ENCODE measurements at regions of chr6 and their contacts with region 1.

Region 1: DNA sequence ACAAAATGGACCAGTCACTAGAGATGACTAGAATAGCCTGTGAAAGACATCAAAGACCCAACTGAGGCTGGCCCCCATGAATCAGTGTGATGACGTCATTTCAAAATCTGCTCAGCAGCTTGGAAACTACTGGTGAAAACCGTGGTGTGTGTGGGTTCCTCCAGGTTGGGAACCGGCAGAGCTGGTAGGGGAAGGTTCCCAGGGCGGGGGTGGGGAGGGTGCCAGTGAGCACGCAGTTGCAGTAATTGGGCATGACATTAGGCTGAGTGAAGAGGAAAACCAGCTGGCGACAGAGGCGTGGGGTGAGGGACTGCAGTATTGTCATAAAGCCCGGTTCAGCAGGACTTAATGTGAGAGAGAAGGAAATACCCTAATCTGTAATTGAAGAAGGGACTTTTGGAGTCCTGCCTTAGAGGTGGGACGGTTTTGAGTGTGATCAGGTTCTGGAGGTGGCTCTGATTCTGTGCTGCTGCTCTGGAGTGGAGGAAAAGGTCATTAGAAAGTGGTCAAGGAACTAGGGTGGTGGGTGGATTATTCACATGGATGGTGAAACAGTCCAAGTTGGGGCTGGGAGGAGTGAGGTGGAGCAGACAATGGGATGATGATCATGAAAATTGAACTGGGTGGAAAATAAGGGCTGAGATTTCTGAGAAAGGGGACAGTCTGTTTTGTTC is 52.0 kb upstream of the MTHFD1L start:
- DNase-seq: no peak
- H3K4me3 ChIP-seq: no peak overlapping the region
- H3K27ac ChIP-seq: no peak overlapping the region
- H3K4me1 ChIP-seq: peaks cover 0 to 11% of the 10 kb centered on the region in 2 donors
- H3K27me3 ChIP-seq: no peaks in the 10 kb centered on the region
- CTCF ChIP-seq: no peak
- POLR2A ChIP-seq: no peak

Region 2: GRCh38 chr6:150068720-150069648 is 744.5 kb before region 1 on chr6 and contains the start of gene ULBP3:
- intact Hi-C with region 1: loop called (anchors 10 kb)
- DNase-seq: peak; percentile 94 to 95
- H3K4me3 ChIP-seq: peak within 1 kb of the TSS; percentile 69 to 91 (median 71)
- H3K27ac ChIP-seq: peak within 1 kb of the TSS; percentile 53 to 70 (median 54)
- H3K4me1 ChIP-seq: peaks cover 9 to 20% of the 10 kb centered on the region in 2 donors
- H3K27me3 ChIP-seq: no peaks in the 10 kb centered on the region
- CTCF ChIP-seq: peak in 5 of 6 experiments; percentile 43 to 69 (median 62)
- POLR2A ChIP-seq: peak in 1 of 2 donors; percentile 92
- total RNA-seq, gene ULBP3: 2.4 to 31.7 (median 16.5) TPM

Region 3: DNA sequence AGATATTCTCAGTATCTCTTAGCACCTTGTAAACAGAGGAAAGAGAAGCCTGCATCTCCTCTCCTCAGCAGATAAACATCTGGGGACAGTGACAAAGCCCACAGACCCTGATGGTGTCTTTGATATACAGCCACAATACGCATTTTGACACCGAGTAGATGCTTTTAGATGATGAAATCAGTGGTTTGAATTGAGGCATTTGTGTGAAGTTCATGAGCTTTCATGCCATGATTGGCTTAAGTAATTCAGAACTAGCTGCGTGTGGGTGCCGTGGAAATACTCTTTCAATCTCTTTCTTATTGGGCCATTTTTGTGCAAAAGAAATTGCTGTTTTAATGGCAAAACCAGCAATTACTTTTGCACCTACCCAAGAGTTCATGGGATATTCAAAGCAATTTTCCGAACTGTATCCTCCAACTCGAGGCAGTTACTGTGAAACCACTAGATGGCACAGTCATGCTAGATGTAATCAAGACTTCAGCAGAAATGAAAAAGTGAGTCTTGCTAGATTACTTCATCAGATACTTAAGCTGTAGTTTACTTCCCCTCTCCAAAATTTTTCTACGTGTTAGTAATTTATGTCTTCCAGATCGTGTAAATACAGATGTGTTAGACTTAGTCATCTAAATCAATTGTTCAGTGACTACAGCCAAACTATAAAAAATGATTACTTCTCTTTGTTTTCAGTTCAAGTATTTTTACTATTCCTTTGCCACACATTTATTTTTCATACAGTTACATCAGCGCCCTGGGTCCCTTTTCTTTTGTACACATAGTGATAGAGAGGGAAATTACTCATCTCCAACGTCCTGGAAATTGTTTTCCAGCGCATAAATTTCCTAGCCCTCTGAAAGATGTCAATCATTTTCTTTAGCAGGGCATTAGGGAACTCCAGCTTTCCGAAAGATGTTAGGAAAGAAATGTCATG is 395.3 kb before region 1 on chr6:
- intact Hi-C with region 1: loop called (anchors 2 kb)
- DNase-seq: peak; percentile 24 to 29
- H3K4me3 ChIP-seq: peak overlapping the region in 1 of 3 donors; percentile 16
- H3K27ac ChIP-seq: peak overlapping the region; percentile 17 to 78 (median 53)
- H3K4me1 ChIP-seq: peaks cover 0 to 3% of the 10 kb centered on the region in 2 donors
- H3K27me3 ChIP-seq: no peaks in the 10 kb centered on the region
- CTCF ChIP-seq: peak; percentile 57 to 93 (median 76)
- POLR2A ChIP-seq: no peak

Region 4: GRCh38 chr6:150600301-150601017 is 213.0 kb before region 1 on chr6:
- intact Hi-C with region 1: loop called (anchors 10 kb)
- DNase-seq: peak; percentile 81 to 83
- H3K4me3 ChIP-seq: peak overlapping the region; percentile 35 to 72 (median 53)
- H3K27ac ChIP-seq: peak overlapping the region; percentile 53 to 77 (median 62)
- H3K4me1 ChIP-seq: peaks cover 0 to 3% of the 10 kb centered on the region in 2 donors
- H3K27me3 ChIP-seq: no peaks in the 10 kb centered on the region
- CTCF ChIP-seq: peak in 5 of 6 experiments; percentile 24 to 69 (median 60)
- POLR2A ChIP-seq: peak in 1 of 2 donors; percentile 19

Region 5: GRCh38 chr6:150765067-150765764 is 48.2 kb before region 1 on chr6:
- intact Hi-C with region 1: no loop called
- DNase-seq: peak; percentile 53 to 64
- H3K4me3 ChIP-seq: no peak overlapping the region
- H3K27ac ChIP-seq: peak overlapping the region in 1 of 3 donors; percentile 66
- H3K4me1 ChIP-seq: peaks cover 22 to 36% of the 10 kb centered on the region in 2 donors
- H3K27me3 ChIP-seq: no peaks in the 10 kb centered on the region
- CTCF ChIP-seq: no peak
- POLR2A ChIP-seq: no peak

Region 6: GRCh38 chr6:151240036-151240685 is 426.7 kb after region 1 on chr6:
- intact Hi-C with region 1: no loop called
- DNase-seq: peak; percentile 82 to 83
- H3K4me3 ChIP-seq: peak overlapping the region; percentile 57 to 80 (median 72)
- H3K27ac ChIP-seq: peak overlapping the region; percentile 66 to 85 (median 76)
- H3K4me1 ChIP-seq: peaks cover 15 to 20% of the 10 kb centered on the region in 2 donors
- H3K27me3 ChIP-seq: no peaks in the 10 kb centered on the region
- CTCF ChIP-seq: no peak
- POLR2A ChIP-seq: peak in 1 of 2 donors; percentile 51

Measured in thyroid gland (tissue), 4 donors.